ENCODE measurements at regions of chrX and their contacts with region 1.

Region 1: DNA sequence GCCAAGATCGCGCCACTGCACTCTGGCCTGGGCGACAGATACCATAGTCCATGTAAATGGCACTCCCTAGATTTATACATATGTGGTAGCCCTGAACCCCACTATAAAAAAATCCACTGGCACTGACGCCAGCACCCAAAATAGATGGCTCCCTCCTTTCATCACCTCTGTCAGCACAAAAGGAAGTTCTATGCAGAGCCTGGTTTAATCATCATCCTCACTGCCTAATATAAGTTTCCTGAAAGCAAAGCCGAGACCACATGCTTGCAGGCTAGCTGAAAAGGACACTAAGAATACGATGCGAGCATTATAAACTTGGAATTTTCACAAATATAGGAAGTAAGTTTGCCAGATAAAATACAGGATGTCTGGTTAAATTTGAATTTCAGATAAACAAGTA is 27.5 kb upstream of the DOCK11 start:
- DNase-seq: no peak
- H3K4me3 ChIP-seq: no peak overlapping the region
- H3K27ac ChIP-seq: no peak overlapping the region
- H3K4me1 ChIP-seq: no peaks in the 10 kb centered on the region
- H3K27me3 ChIP-seq: no peaks in the 10 kb centered on the region
- CTCF ChIP-seq: no peak
- POLR2A ChIP-seq: no peak

Region 2: DNA sequence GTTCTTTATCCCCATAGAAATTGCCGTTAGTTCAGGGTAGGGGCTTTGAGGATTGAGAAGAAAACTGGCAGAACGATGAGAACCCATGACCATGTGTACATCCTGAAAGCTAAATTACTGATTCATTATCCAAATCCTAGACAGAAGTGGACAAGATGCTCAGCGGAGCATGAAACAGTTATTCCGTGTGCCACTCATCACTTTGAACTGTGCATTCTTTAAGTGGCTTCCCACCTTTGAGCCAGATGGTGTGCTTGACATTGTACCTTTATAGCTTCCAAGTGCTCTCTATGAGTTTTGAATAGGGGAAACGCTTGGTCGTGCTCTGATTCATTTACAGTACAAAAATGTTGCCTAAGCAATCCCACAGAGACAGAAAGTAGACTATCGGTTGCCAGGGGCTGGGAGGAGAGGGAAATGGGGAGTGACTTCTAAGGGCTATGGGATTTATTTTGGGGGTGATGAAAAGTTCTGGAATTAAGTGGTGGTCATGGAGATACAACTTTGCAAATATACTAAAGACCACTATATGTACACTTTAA is 127.5 kb after region 1 on chrX:
- intact Hi-C with region 1: loop called (anchors 10 kb)
- DNase-seq: no peak
- H3K4me3 ChIP-seq: no peak overlapping the region
- H3K27ac ChIP-seq: no peak overlapping the region
- H3K4me1 ChIP-seq: peaks cover 0 to 5% (median 0%) of the 10 kb centered on the region in 3 donors
- H3K27me3 ChIP-seq: no peaks in the 10 kb centered on the region
- CTCF ChIP-seq: no peak
- POLR2A ChIP-seq: no peak